PC-9 (cell line): ENCODE measurements at regions of chr12 and their contacts with region 1.

Region 1: GRCh38 chr12:112992541-112993398 is 14.5 kb downstream of the OAS2 start:
- DNase-seq: peak; percentile 48 to 56
- H3K4me3 ChIP-seq: no peak overlapping the region
- H3K27ac ChIP-seq: no peak overlapping the region
- H3K4me1 ChIP-seq: no peaks in the 10 kb centered on the region
- H3K27me3 ChIP-seq: peaks cover 10% of the 10 kb centered on the region; the same call in 1 of the 2 replicates
- CTCF ChIP-seq: peak; percentile 97

Region 2: GRCh38 chr12:111214401-111214800 is 1778.4 kb before region 1 on chr12:
- CTCF ChIA-PET with region 1: interaction called, 13 read pairs
- POLR2A ChIA-PET with region 1: no interaction called
- intact Hi-C with region 1: no loop called
- DNase-seq: no peak
- H3K4me3 ChIP-seq: no peak overlapping the region
- H3K27ac ChIP-seq: no peak overlapping the region
- H3K4me1 ChIP-seq: no peaks in the 10 kb centered on the region
- H3K27me3 ChIP-seq: peaks cover 100% of the 10 kb centered on the region
- CTCF ChIP-seq: no peak

Region 3: GRCh38 chr12:112906712-112907414 is 85.9 kb before region 1 on chr12 and contains the start of gene OAS1:
- CTCF ChIA-PET with region 1: no interaction called
- POLR2A ChIA-PET with region 1: no interaction called
- intact Hi-C with region 1: loop called (anchors 10 kb)
- DNase-seq: peak; percentile 43 to 73
- H3K4me3 ChIP-seq: peak within 1 kb of the TSS; percentile 48
- H3K27ac ChIP-seq: peak within 1 kb of the TSS; percentile 58
- H3K4me1 ChIP-seq: peaks cover 18% of the 10 kb centered on the region
- H3K27me3 ChIP-seq: no peaks in the 10 kb centered on the region
- CTCF ChIP-seq: no peak
- total RNA-seq, gene OAS1: 13.4 and 18.8 TPM in 2 replicates

Region 4: DNA sequence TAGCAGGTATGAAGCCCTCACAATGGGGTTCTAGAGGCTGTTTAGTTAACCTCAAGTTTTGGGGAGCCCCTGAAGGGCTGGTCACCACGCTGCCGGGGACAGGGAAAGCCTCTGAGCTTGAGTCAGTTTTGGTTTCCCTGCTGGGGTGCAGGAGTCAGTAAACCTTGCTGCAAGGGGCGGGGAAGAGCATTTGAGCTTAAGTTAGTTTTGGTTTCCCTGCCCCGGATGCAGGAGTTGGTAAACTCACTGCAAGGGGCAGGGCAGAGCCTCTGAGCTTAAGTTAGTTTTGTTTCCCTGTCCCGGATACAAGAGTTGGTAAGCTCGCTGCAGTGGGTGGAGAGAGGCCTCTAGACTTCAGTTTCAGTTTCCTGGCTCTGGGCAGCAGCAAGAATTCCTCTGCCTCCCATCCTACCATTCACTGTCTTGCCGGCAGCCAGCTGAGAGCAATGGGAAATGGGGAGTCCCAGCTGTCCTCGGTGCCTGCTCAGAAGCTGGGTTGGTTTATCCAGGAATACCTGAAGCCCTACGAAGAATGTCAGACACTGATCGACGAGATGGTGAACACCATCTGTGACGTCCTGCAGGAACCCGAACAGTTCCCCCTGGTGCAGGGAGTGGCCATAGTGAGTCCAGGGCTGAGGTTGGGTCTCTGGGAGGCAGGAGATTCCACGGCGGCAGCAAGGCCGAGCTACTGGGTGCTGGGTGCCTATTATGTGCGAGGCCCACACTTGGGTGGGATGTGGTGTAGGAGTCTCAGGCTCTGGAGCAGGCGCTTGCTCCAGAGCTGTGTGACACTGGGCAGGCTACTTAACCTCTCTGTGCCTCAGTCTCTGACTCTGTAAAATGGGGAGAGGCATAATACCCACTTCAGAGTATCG is 14.4 kb before region 1 on chr12 and contains the start of gene OAS2:
- CTCF ChIA-PET with region 1: interaction called, 14 read pairs
- POLR2A ChIA-PET with region 1: no interaction called
- intact Hi-C with region 1: no loop called
- DNase-seq: peak in 1 of 2 experiments; percentile 31
- H3K4me3 ChIP-seq: no peak within 1 kb of the TSS
- H3K27ac ChIP-seq: no peak within 1 kb of the TSS
- H3K4me1 ChIP-seq: no peaks in the 10 kb centered on the region
- H3K27me3 ChIP-seq: peaks cover 5% of the 10 kb centered on the region; the same call in 1 of the 2 replicates
- CTCF ChIP-seq: no peak
- total RNA-seq, gene OAS2: 0.98 and 1.3 TPM in 2 replicates

Region 5: DNA sequence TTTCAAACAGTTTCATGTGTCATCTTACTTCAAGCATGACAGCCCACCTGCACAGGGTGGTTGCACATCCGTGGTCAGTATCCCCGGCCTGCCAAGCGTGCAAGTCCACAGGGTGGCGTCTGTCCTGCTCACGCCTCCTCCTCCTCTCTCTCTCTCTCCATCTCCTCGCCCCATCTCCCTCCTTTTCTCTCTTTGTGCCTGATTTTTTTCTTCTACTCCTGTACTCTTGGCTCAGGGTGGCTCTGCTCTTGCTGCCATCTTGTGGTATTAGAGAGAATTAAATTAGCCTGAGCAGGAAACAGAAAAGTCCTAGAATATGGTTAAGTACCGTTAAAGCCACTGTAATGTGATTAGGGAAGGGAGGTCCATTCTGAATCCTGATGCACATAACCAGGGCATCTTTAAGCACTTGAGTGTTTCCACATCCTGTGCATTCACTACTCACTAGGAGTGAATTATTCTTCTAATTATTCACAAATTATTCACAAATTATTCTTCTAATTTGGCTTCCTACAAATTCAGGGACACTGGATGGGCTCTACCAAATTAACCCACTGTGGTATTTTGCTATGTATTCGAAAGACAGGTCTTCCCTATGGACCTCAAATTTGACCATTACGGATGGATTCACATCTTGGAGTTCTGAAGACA is 38.2 kb after region 1 on chr12:
- CTCF ChIA-PET with region 1: interaction called, 6 read pairs
- POLR2A ChIA-PET with region 1: no interaction called
- intact Hi-C with region 1: loop called (anchors 1 kb)
- DNase-seq: peak; percentile 21 to 52
- H3K4me3 ChIP-seq: no peak overlapping the region
- H3K27ac ChIP-seq: no peak overlapping the region
- H3K4me1 ChIP-seq: no peaks in the 10 kb centered on the region
- H3K27me3 ChIP-seq: 0 out of 2 replicates have a peak, but pooled peaks cover 3% of the 10 kb centered on the region
- CTCF ChIP-seq: peak; percentile 79

Region 6: DNA sequence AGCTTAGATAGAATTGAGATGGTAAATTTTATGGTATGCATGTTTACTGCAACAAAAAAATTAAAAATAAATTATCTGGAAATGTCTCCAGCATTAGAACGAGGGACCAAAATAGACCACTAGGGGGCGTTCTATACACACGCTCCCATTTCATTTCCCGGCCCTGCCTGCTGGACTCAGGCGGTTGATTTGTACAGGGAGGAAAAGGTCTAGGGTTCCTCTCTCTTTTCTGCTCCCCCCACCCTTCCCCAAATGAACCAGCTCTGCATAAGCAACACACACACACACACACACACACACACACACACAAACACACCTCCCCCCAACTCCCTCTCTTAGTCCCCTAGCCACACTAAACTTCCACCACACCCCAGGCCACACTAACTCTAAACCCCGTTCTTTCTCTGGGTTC is 56.0 kb after region 1 on chr12:
- CTCF ChIA-PET with region 1: interaction called, 6 read pairs
- POLR2A ChIA-PET with region 1: no interaction called
- intact Hi-C with region 1: loop called (anchors 5 kb)
- DNase-seq: peak; percentile 42 to 48
- H3K4me3 ChIP-seq: no peak overlapping the region
- H3K27ac ChIP-seq: no peak overlapping the region
- H3K4me1 ChIP-seq: no peaks in the 10 kb centered on the region
- H3K27me3 ChIP-seq: peaks cover 22% of the 10 kb centered on the region
- CTCF ChIP-seq: peak; percentile 86

Region 7: DNA sequence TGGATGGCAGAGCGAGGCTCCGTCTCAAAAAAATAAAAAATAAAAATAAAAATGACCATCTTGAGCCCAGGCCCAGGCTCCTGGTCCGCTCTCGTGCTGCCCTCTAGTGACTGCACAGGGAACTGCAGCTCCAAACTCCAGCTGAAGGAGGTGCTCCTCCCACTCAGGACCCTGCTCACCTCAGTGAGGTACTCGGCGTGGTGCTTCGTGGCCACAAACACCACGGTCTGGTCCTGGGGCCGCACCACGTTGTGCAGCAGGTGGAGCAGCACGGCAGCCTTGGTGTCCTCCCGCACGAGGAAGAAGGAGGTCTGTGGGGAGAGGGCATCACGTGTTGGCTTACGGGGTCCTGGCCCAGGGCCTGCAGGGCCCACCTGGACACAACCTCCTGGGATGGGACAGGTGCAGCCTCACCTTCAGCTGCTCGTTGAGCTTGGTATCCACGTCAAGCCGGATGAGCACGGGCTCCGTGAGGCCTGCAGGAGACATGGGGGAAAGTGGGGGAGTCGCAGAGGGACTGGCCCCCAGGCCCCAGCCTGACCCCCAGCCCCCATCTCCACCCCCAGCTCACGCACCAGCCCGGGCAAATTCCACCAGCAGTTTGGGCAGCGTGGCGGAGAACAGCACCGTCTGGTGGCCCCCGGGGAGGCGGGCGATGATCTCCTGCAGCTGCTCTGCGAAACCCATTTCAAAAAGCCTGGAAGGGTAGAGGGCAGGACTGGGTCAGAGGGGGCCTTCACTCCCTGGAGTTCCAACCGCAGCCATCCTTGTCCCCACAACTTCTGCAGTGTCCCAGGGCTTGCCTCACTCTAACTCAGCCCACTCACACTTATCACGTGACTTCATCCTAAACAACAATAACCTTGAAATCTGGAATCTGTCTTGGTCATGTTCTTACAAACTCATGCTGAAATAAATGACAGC is 182.0 kb after region 1 on chr12:
- CTCF ChIA-PET with region 1: interaction called, 10 read pairs
- POLR2A ChIA-PET with region 1: no interaction called
- intact Hi-C with region 1: loop called (anchors 2 kb)
- DNase-seq: peak; percentile 50 to 75
- H3K4me3 ChIP-seq: no peak overlapping the region
- H3K27ac ChIP-seq: no peak overlapping the region
- H3K4me1 ChIP-seq: no peaks in the 10 kb centered on the region
- H3K27me3 ChIP-seq: no peaks in the 10 kb centered on the region
- CTCF ChIP-seq: peak; percentile 99

Region 8: DNA sequence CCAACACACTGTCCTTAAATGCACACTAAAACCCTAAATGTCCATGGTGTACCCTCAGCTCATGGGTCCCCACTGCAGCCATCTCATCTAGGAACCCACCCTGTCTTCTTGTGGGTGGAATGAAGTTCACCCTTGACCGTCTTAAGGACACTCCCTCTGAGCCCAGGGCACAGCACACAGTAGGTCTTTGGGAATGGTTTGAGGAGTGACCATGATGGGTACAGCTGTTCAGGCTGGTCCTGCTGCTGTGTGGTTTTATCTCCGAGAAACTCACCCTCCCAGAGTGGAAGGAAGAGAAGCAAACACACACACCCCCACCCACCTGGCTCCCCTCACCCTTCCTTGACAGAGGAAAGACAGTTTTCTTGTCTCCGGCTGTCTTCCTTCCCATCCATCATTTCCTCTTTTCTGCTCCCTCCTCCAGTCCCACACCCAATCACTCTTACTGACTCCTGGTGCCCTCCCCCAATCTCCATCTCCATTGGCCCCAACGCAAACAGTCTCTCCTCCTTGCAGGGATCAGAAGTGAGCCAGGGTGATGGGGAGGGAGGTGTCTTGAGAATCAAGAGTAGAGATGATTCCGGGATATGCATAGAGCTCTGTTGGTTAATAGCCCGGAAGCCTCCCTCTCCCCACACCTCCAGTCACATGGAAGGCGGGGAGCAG is 584.8 kb after region 1 on chr12:
- CTCF ChIA-PET with region 1: no interaction called
- POLR2A ChIA-PET with region 1: no interaction called
- intact Hi-C with region 1: no loop called
- DNase-seq: no peak
- H3K4me3 ChIP-seq: no peak overlapping the region
- H3K27ac ChIP-seq: no peak overlapping the region
- H3K4me1 ChIP-seq: peaks cover under 1% of the 10 kb centered on the region; the same call in 1 of the 2 replicates
- H3K27me3 ChIP-seq: 0 out of 2 replicates have a peak, but pooled peaks cover 6% of the 10 kb centered on the region
- CTCF ChIP-seq: no peak